ENCODE measurements at regions of chr3 and their contacts with region 1.

Region 1: DNA sequence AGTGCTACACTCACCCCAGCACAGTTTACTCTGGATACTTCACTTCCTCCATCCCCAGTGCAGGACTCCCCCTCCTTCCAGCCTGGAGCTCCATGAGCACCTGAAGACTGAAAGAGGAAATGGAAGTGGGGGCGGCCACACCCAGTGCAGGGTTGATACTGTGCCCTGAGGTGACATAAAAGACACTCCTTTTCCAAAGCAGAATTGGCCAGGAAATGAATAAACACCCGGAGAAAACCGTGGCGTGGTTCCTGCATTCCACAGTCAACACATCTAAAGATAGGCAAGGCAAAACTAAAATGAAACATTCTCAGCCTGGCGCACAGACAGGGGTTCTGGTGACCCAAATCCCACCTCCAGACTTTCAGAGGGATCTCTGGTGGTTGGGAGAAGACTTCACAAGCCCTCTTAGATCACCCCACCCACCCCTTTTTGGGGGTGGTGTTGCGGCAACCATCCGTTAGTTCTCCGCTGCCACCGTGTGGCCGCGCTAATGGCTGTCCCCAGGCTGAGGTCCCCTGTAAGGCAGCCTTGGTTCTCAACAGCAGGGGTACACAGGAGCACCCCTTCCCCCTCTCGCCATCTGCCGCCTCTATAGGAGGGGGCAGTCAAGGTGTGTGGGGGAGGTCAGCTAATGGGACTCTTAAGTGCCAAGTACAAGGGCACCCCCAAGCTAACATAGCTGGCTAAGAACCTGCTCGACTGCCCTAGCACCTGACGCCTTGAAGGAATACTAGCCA is 2.5 kb upstream of the MST1R start:
- DNase-seq: peak; percentile 76 to 86 (median 80)
- ATAC-seq: peak; percentile 75
- H3K4me3 ChIP-seq: peak overlapping the region; percentile 31
- H3K27ac ChIP-seq: peak overlapping the region; percentile 82
- H3K4me1 ChIP-seq: peaks cover 37 to 73% of the 10 kb centered on the region in 2 experiments
- H3K27me3 ChIP-seq: no peaks in the 10 kb centered on the region
- CTCF ChIP-seq: peak; percentile 73 to 81 (median 80)
- EP300 ChIP-seq: no peak
- POLR2A ChIP-seq: no peak
- RAD21 ChIP-seq: peak; percentile 57 to 74

Region 2: GRCh38 chr3:49469936-49470713 is 436.0 kb before region 1 on chr3 and contains the start of gene DAG1:
- CTCF ChIA-PET with region 1: no interaction called
- POLR2A ChIA-PET with region 1: no interaction called
- in situ Hi-C with region 1: no loop called
- intact Hi-C with region 1: no loop called
- DNase-seq: peak; percentile 92 to 95 (median 92)
- ATAC-seq: peak; percentile 92
- H3K4me3 ChIP-seq: peak within 1 kb of the TSS; percentile 92
- H3K27ac ChIP-seq: peak within 1 kb of the TSS; percentile 92
- H3K4me1 ChIP-seq: peaks cover 31 to 38% of the 10 kb centered on the region in 2 experiments
- H3K27me3 ChIP-seq: no peaks in the 10 kb centered on the region
- CTCF ChIP-seq: no peak
- EP300 ChIP-seq: no peak
- POLR2A ChIP-seq: peak; percentile 78; the same call in 1 of the 2 replicates
- RAD21 ChIP-seq: no peak; a peak in 1 of 4 replicates
- polyA plus RNA-seq, gene DAG1: 0.29 to 0.39 TPM

Region 3: GRCh38 chr3:49553692-49554632 is 352.2 kb before region 1 on chr3 and contains the start of gene BSN:
- CTCF ChIA-PET with region 1: no interaction called
- POLR2A ChIA-PET with region 1: no interaction called
- in situ Hi-C with region 1: no loop called
- intact Hi-C with region 1: loop called (anchors 10 kb)
- DNase-seq: peak; percentile 92 to 99 (median 98)
- ATAC-seq: peak; percentile 94
- H3K4me3 ChIP-seq: peak within 1 kb of the TSS; percentile 52
- H3K27ac ChIP-seq: peak within 1 kb of the TSS; percentile 54
- H3K4me1 ChIP-seq: peaks cover 14 to 27% of the 10 kb centered on the region in 2 experiments; a peak in 4 of 5 replicates
- H3K27me3 ChIP-seq: no peaks in the 10 kb centered on the region
- CTCF ChIP-seq: no peak
- EP300 ChIP-seq: no peak
- POLR2A ChIP-seq: peak; percentile 55; the same call in 1 of the 2 replicates
- RAD21 ChIP-seq: no peak
- polyA plus RNA-seq, gene BSN: 0.03 to 0.06 TPM

Region 4: GRCh38 chr3:49703443-49703927 is 202.7 kb before region 1 on chr3:
- CTCF ChIA-PET with region 1: interaction called, 3 read pairs
- POLR2A ChIA-PET with region 1: no interaction called
- in situ Hi-C with region 1: no loop called
- intact Hi-C with region 1: loop called (anchors 5 kb)
- DNase-seq: peak; percentile 60 to 71 (median 64)
- ATAC-seq: peak; percentile 95
- H3K4me3 ChIP-seq: no peak overlapping the region
- H3K27ac ChIP-seq: no peak overlapping the region
- H3K4me1 ChIP-seq: peaks cover 0 to 10% of the 10 kb centered on the region in 2 experiments; a peak in 2 of 5 replicates
- H3K27me3 ChIP-seq: no peaks in the 10 kb centered on the region
- CTCF ChIP-seq: peak; percentile 71 to 76 (median 72)
- EP300 ChIP-seq: no peak
- POLR2A ChIP-seq: no peak
- RAD21 ChIP-seq: peak; percentile 60 to 69

Region 5: GRCh38 chr3:49839193-49839809 is 66.9 kb before region 1 on chr3:
- CTCF ChIA-PET with region 1: interaction called, 7 read pairs
- POLR2A ChIA-PET with region 1: no interaction called
- in situ Hi-C with region 1: no loop called
- intact Hi-C with region 1: loop called (anchors 1 kb)
- DNase-seq: peak; percentile 49 to 78 (median 58)
- ATAC-seq: peak; percentile 94
- H3K4me3 ChIP-seq: no peak overlapping the region
- H3K27ac ChIP-seq: no peak overlapping the region
- H3K4me1 ChIP-seq: no peaks in the 10 kb centered on the region; a peak in 1 of 5 replicates
- H3K27me3 ChIP-seq: no peaks in the 10 kb centered on the region
- CTCF ChIP-seq: peak; percentile 77 to 90 (median 82)
- EP300 ChIP-seq: no peak
- POLR2A ChIP-seq: no peak
- RAD21 ChIP-seq: peak; percentile 86 to 88

Region 6: DNA sequence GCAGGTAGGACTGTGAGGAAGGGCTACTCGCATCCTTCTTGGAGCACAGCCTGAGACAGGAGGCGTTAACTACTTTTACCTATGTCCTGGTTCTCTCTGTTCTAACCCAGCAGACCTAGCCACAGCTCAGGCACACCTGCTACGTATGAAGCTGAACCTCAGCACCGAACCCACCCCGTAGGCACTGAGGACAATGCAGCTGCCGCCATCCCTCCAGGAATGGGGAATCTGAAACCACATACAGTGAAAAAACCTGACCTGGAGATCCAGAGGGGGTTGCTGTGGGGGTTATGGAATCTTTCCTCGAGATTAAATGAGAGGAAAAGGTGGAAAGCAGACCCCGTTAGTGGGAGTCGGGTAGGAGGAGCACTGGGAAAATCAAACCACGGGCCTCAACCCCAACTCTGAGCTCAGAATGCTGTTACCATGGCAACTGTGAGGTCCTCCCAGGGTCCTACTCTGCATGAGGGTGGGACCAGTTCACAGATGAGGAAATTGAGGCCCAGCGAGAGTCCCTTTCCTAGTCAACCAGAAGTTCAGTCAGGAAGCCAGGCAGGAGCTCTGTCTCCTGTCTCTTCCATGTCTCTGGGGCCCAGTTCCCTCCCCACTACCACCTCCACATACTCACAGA is 16.8 kb before region 1 on chr3:
- CTCF ChIA-PET with region 1: no interaction called
- POLR2A ChIA-PET with region 1: no interaction called
- in situ Hi-C with region 1: no loop called
- intact Hi-C with region 1: no loop called
- DNase-seq: no peak
- ATAC-seq: no peak
- H3K4me3 ChIP-seq: no peak overlapping the region
- H3K27ac ChIP-seq: no peak overlapping the region
- H3K4me1 ChIP-seq: peaks cover 5 to 8% of the 10 kb centered on the region in 2 experiments; a peak in 3 of 5 replicates
- H3K27me3 ChIP-seq: no peaks in the 10 kb centered on the region
- CTCF ChIP-seq: no peak
- EP300 ChIP-seq: no peak
- POLR2A ChIP-seq: no peak
- RAD21 ChIP-seq: no peak

Measured in K562 (cell line).